Activated T-helper 1 cell treated with anti-CD3 and anti-CD28 coated beads, Interleukin-12 subunit alpha, Interleukin-12 subunit beta, Interleukin-2, Interleukin-4 antibody, amounts not matched to agents 30 ng/mL and 10 ng/mL and 1 ng/mL, durations not matched to agents 14 hours and 24 hours and 36 hours (primary cell): ENCODE measurements at regions of chr3 and their contacts with region 1.

Region 1: DNA sequence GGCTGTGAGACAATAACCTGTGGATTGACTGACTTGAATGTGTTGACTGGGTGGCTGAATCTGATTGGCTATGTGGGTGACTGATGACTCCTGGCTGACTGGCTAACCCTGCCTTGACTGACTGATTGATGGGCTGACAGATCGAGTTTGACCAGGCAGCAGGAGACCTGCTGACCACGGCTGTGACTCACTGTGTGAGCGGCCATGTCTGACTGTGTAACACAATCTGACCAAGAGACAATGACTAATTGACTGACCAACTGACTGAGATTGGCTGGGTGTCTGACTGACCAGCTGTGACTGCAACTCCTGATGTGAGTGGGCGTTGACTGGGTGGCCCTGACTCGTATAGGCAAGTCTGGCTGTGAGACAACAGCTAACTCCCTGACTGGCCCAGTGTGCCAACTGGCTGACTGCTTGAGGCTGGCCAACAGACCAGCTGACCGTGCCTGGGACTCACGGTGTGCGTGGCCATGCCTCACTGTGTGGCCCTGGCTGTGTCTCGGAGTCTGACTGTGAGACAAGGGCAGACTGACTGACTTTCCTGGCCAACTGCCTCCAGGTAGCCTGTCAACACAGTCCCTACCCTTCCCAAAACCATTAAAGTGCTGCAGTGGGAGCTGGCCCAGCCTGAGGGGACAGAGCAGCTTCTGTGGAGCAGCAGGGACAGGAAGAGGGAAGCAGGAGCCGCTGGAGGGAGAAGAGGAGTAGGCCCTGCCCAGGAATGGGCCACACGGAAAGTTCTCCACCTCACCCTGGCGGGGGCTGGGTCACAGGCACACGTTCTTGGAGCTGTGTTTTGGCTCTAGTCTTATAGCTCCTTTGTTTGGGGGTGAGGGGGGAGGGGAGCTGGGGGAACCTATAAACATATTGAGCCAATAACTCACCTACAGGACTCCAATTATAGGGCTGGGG is 508.9 kb downstream of the SHQ1 start:
- DNase-seq: no peak
- H3K4me3 Mint-ChIP-seq: no peak overlapping the region
- H3K27ac Mint-ChIP-seq: no peak overlapping the region
- H3K4me1 Mint-ChIP-seq: peaks cover 32% of the 10 kb centered on the region
- H3K27me3 Mint-ChIP-seq: peaks cover under 1% of the 10 kb centered on the region

Region 2: DNA sequence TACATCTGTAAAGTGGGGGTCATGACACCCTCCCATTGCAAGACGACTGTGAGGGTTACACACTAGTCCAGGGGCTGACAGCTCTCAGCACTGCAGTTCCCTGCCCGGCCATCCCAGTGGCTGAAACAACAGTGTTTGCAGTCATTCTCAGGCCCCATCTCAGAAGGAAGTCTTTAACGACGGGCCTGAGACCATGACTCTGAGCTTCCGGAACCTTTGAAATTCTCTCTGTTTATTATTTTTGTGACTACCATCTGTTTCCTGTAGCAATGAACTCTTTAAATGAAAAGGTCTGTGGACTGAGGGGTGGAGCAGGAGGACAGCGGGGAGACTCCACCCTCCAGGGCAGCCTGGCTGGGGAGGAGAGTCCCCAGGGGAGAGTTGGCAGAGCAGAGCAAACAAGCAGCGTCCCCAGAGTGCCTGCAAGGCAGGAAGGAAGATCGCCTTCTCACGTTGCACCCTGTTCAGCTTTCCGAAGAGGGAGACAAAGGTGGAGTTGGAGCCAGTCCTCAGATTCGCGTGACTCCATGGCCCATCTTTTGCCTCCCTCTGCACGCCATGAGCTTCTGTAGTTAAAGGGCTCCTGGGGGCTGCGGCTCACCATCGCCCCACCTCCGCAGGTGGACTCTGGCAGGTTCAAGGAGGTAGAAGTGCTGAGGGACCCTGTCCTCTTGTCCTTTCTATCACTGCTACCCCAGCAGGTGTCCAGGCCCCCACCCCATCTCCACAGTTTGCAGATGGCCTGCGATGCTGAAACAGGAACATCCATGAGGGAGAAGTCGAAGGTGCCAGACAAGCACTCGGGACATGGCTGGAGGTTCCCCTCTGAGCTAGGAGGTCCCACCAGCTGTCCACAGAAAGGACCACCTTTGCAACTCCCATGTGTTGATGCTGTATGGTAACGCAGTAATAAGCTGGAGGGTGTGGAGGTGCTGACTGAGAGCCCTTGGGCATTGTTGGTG is 28.7 kb before region 1 on chr3:
- intact Hi-C with region 1: loop called (anchors 1 kb)
- DNase-seq: peak; percentile 12
- H3K4me3 Mint-ChIP-seq: peak overlapping the region; percentile 82
- H3K27ac Mint-ChIP-seq: peak overlapping the region; percentile 95
- H3K4me1 Mint-ChIP-seq: peaks cover 23% of the 10 kb centered on the region
- H3K27me3 Mint-ChIP-seq: no peaks in the 10 kb centered on the region

Region 3: GRCh38 chr3:72482589-72483321 is 143.4 kb after region 1 on chr3:
- intact Hi-C with region 1: loop called (anchors 2 kb)
- DNase-seq: peak; percentile 47
- H3K4me3 Mint-ChIP-seq: peak overlapping the region; percentile 68
- H3K27ac Mint-ChIP-seq: peak overlapping the region; percentile 94
- H3K4me1 Mint-ChIP-seq: peaks cover 73% of the 10 kb centered on the region
- H3K27me3 Mint-ChIP-seq: no peaks in the 10 kb centered on the region